ENCODE measurements at regions of chr1 and their contacts with region 1.

Region 1: DNA sequence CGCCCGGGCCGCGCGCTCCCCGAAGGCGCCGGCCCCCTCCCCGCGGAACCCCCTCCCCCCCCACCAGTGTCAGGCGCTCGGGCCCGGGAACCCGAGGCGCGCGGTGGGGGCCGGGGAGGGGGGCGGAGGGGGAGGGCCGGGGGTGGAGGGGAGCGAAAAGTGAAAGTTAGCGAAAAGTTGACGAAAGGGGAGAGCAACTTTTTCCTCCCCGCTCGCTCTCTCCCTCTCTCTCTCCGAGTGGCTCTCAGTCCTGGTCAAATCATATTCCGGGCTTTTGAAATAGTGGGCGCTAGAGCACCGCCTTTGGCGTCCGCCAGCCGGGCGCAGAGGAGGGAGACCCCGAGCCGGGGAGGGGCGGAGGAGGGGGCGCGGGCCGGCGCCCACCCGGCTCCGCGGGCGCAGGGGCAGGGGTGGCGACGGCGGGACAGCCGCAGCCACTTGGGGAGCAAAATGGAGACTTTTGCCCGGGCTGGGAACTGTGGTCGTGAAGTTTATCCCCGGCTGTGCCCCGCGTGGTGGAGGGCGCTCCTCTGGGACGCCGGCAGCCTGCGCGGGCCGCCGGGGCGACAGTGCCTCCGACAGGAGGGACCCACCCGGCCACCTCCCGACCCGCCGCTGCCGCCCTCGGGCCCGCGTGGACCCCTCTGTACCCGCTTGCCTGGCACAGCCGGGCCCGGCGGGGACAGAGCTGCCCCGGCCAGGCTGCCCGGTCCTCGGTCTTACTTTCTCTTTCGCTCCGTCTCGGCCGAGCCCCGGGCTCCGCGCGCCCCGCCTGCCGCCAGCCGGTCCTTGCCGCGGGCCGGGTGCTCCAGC is 694 bp downstream of the PRDM16 start:
- DNase-seq: peak; percentile 45
- ATAC-seq: peak; percentile 60 to 76

Region 2: DNA sequence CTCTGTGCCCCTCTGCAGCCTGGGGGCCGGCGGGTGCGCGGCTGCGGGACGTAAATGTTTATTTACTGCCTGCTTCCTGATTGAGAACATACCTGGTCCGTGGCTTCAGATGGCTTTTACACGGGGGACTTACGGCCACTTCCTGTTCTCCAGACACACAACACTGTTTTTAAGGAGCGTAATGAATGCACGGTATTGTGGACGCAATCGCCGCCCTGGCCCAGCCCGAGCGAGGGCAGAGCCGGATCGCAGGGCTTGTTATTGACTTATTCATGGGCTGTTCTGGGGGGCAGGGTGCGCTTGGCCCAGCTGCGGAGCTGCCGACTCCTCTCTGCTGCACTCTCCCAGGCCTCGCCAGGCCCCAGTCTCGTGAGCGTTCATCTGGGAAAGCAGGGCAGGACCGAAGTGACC is 101.2 kb before region 1 on chr1:
- intact Hi-C with region 1: no loop called
- DNase-seq: no peak
- ATAC-seq: no peak

Region 3: DNA sequence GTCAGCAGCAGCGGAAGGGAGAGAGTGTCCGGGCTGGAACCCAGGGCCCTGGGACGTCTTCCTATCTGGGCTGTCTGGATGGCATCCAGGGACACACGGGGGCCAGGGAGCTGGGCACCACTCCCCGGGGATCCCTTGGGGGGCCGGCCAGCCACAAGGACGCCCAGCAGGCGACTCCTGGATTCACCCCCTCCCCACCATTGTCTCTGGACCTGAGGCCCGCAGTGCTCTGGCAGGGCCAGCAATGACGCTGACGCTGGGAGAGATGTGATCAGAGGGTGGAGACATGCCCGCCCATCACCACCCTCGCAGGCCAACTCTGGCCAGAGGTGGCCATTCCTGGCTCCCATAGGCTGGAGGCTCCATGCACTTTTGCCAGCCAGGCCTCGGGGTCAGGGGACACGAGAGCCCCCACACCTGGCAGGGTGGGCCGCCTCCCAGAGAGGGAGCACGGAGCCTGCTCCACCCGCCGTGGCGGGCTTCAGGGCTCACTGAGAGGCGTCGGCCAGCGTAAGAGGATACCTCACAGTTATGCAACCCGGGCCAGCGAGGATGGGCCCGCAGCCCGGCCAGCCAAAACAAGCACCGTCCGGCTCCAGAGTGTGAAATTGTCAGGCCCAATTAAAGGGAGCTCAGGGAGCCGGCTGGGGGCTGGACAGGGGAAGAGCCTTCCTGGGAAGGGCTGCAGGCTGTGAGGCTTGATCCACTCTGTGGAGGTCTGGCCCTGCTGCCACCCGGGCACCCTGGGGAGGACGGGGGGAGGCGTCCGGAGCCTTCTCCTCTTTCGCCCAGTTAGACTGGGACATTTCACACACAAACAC is 38.1 kb before region 1 on chr1:
- intact Hi-C with region 1: no loop called
- DNase-seq: no peak
- ATAC-seq: peak in 1 of 2 donors; percentile 81

Region 4: GRCh38 chr1:3283849-3284248 is 214.2 kb after region 1 on chr1:
- intact Hi-C with region 1: loop called in 1 of 2 experiments (anchors 10 kb)
- DNase-seq: peak; percentile 43
- ATAC-seq: peak; percentile 74 to 78

Region 5: DNA sequence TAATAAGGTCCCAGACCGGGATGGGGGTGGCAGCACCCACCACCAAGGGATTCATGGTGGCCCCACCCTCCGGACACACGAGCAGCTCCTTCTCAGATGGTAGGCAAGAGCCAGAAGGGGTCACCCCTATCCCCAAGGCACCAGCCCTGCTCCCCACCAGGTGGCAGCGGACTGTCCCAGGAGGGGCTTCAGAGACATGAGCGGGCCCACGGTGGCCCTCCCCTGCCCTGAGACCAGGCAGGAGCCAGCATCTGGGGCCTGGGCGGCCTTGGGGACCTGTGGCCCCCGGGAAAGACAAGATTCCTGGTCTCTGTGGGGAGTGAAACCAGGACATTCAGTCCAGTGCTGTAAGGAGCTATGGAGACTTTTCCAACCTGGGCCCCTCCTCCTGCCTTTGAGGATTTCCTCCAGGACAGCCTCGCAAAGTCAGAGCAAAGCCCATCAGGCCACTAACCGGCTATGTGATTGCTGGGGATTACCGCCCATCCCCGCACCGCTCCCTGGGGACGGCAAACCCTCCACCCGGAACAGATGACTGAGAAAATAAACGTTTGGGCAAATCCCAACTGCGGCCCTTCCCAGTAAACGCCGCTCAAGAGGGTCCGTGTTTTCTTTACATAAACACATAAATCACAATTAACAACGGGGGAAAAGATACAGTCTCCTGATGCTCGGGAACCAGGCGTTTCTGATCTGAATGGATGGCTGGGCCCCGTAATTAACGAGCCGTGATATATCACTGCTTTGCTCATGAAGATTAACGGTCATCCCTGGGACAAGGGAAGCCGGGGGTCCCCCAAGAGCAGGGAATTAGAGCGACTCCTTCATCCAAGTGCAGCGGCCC is 333.9 kb after region 1 on chr1:
- intact Hi-C with region 1: loop called in 1 of 2 experiments (anchors 10 kb)
- DNase-seq: no peak
- ATAC-seq: no peak

Measured in left cardiac atrium (tissue), 4 donors.